ENCODE measurements at regions of chr16 and their contacts with region 1.

Region 1: GRCh38 chr16:67806428-67807147 is at the starts of genes RANBP10 and TSNAXIP1:
- DNase-seq: peak; percentile 98 to 99
- ATAC-seq: peak; percentile 97 to 98
- H3K4me3 ChIP-seq: peak within 1 kb of the TSS; percentile 86 to 99 (median 96)
- H3K27ac ChIP-seq: peak within 1 kb of the TSS; percentile 92 to 99 (median 97)
- H3K4me1 ChIP-seq: peaks cover 32 to 35% of the 10 kb centered on the region in 2 donors
- H3K27me3 ChIP-seq: no peaks in the 10 kb centered on the region
- CTCF ChIP-seq: no peak
- POLR2A ChIP-seq: peak; percentile 92 to 97
- total RNA-seq, gene RANBP10: 12.6 to 46.6 (median 14.8) TPM
- total RNA-seq, gene TSNAXIP1: 0.27 to 11.0 (median 0.56) TPM in 3 of 4 donors, not detected in the other

Region 2: GRCh38 chr16:67579686-67580085 is 226.9 kb before region 1 on chr16:
- in situ Hi-C with region 1: no loop called
- intact Hi-C with region 1: no loop called
- DNase-seq: no peak
- ATAC-seq: no peak
- H3K4me3 ChIP-seq: no peak overlapping the region
- H3K27ac ChIP-seq: no peak overlapping the region
- H3K4me1 ChIP-seq: no peaks in the 10 kb centered on the region
- H3K27me3 ChIP-seq: no peaks in the 10 kb centered on the region
- CTCF ChIP-seq: no peak
- POLR2A ChIP-seq: no peak

Region 3: GRCh38 chr16:67595033-67595355 is 211.6 kb before region 1 on chr16:
- in situ Hi-C with region 1: no loop called
- intact Hi-C with region 1: no loop called
- DNase-seq: peak; percentile 29 to 35
- ATAC-seq: peak; percentile 60 to 69
- H3K4me3 ChIP-seq: no peak overlapping the region
- H3K27ac ChIP-seq: peak overlapping the region in 2 of 4 donors; percentile 8 to 33
- H3K4me1 ChIP-seq: peaks cover 14% of the 10 kb centered on the region in 2 donors
- H3K27me3 ChIP-seq: no peaks in the 10 kb centered on the region
- CTCF ChIP-seq: no peak
- POLR2A ChIP-seq: no peak

Region 4: DNA sequence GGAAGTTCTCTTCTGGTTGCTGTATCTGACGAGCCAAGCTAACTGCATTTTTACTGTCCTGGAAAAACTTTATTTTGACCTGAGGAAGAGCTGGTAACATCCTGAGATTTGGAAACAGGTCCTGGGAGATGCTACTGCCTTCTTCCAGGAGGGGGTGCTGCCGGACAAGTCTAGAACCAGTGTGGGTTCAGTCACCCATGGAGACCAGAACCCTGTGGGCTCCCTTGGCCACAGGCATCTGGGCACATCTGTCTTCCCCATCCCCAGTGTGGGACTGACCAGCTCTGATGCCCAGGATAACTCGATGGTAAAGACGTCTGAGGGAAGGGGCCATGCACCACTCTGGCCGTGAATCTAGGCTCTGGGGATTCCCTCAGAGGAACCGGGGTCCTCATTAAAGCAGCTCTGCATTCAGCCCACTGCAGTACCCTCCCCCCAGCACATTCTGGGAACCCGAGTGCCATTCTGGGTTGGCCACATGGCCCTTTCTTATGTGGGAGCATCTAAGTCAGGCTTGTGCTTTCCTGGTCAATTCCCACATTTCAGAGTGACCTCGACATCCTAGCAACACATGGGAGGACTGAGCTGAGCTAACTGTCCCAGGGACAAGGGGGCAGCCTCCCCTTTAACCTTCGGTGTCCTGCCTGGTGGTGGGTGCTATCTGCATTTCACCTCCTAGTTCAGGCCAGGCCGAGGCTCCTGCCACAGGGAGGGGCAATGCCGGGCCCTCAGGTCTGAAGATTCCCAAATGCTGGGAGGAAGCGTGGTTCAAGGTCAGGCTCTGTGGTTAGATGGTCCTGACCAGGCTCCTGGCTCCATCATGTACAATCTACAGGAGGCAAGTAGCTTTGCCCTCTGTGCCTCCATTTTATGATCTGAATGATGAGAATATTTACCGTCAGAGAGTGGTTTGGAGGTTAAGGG is 133.6 kb before region 1 on chr16:
- in situ Hi-C with region 1: no loop called
- intact Hi-C with region 1: loop called (anchors 1 kb)
- DNase-seq: peak; percentile 40 to 57
- ATAC-seq: peak; percentile 38 to 51
- H3K4me3 ChIP-seq: no peak overlapping the region
- H3K27ac ChIP-seq: peak overlapping the region; percentile 50 to 80 (median 73)
- H3K4me1 ChIP-seq: peaks cover 13 to 21% of the 10 kb centered on the region in 2 donors
- H3K27me3 ChIP-seq: no peaks in the 10 kb centered on the region
- CTCF ChIP-seq: peak; percentile 63 to 82 (median 74)
- POLR2A ChIP-seq: no peak

Region 5: DNA sequence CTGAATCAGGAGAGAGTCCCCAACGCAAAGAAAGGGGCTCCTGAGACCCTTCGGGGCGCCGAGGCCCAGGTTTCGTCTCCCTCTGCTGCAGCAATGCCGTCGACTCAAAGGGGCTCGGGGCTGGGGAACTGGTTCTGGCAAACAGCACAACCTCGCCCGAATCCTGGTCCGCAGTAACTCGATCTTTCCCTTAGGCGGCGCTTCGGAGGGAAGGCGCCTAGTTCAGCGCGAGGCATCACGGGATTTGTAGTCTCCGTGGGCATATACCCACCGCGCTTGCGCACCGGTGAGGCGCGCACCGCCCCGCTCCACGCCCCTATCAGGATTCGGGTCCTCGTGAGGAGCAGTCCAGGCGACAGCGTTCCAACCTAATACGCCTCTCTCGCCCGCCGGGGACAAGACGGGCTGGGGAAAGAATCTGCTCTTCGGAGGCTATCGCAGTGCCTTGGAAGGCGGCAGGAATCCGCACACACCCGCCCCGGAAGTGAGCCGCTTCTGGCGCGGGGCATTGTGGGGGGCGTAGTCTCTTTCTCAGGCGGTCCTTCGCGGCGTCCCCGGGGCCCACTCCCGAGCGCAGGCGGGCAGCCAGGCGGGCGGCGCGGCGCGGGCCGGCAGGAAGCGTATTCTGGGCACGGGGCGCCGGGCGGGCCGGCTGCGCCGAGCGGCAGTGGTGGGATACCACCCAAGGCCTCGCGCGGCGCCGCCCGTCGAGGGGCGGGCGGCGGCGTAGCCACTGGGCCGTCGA is 35.3 kb after region 1 on chr16 and contains the start of gene THAP11:
- in situ Hi-C with region 1: no loop called
- intact Hi-C with region 1: loop called (anchors 2 kb)
- DNase-seq: peak; percentile 91 to 92
- ATAC-seq: peak; percentile 77 to 82
- H3K4me3 ChIP-seq: peak within 1 kb of the TSS; percentile 76 to 95 (median 78)
- H3K27ac ChIP-seq: peak within 1 kb of the TSS; percentile 98 to 100 (median 99)
- H3K4me1 ChIP-seq: peaks cover 39 to 43% of the 10 kb centered on the region in 2 donors
- H3K27me3 ChIP-seq: no peaks in the 10 kb centered on the region
- CTCF ChIP-seq: peak; percentile 76 to 91 (median 89)
- POLR2A ChIP-seq: peak; percentile 86 to 87
- total RNA-seq, gene THAP11: 61.9 to 120 (median 102) TPM

Region 6: GRCh38 chr16:67872786-67873537 is 66.4 kb after region 1 on chr16 and contains the start of gene EDC4:
- in situ Hi-C with region 1: no loop called
- intact Hi-C with region 1: no loop called
- DNase-seq: peak; percentile 68 to 85
- ATAC-seq: peak; percentile 86 to 89
- H3K4me3 ChIP-seq: peak within 1 kb of the TSS; percentile 71 to 92 (median 84)
- H3K27ac ChIP-seq: peak within 1 kb of the TSS; percentile 85 to 94 (median 89)
- H3K4me1 ChIP-seq: peaks cover 28 to 31% of the 10 kb centered on the region in 2 donors
- H3K27me3 ChIP-seq: no peaks in the 10 kb centered on the region
- CTCF ChIP-seq: no peak
- POLR2A ChIP-seq: peak; percentile 73 to 88
- total RNA-seq, gene EDC4: 27.5 to 58.9 (median 48.5) TPM

Region 7: DNA sequence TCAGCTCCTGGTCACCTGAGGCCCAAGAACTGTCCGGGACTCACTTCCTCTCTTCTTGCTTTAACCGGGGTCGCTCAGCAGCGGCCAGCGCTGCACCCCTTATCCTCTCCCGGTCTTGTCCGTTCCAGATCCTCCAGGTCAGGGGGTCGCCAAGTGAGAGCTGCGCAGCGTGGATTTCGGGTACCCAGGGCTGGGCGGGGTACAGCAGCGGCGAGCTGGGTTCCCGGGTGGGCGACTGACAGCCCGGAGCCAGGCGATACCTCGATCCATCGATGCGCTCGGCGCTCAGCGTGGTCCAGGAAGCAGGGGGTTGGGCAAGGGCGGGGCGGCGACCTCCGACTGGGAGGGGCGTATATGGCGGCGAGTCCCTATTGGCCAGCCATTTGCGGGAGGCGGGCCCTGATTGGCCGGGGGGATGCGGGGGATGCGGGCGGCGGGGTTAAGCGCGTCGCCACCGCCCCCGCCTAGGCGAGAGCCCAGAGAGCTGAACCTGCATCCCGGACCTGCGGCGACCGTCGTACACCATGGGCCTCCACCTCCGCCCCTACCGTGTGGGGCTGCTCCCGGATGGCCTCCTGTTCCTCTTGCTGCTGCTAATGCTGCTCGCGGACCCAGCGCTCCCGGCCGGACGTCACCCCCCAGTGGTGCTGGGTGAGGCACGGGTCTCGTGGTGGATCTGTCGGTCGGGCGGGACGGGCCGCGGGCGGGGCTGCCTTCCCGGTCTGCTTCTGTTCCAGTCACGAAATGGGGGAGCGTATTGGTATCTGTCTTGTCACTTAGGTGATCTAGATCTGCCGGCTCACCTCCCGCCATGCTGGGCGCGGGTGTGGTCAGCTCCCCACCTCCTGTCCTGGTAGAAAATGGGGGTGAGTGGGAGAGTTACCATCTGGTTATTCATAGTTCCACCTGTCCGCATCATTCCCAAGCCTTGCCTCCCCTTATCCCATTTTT is 438.6 kb after region 1 on chr16 and contains the start of gene PLA2G15:
- in situ Hi-C with region 1: loop called in 1 of 4 experiments (anchors 25 kb)
- intact Hi-C with region 1: no loop called
- DNase-seq: peak; percentile 96 to 97
- ATAC-seq: peak; percentile 58 to 63
- H3K4me3 ChIP-seq: peak within 1 kb of the TSS; percentile 68 to 97 (median 92)
- H3K27ac ChIP-seq: peak within 1 kb of the TSS; percentile 95 to 100 (median 99)
- H3K4me1 ChIP-seq: peaks cover 42 to 52% of the 10 kb centered on the region in 2 donors
- H3K27me3 ChIP-seq: no peaks in the 10 kb centered on the region
- CTCF ChIP-seq: no peak
- POLR2A ChIP-seq: peak; percentile 98 to 99
- total RNA-seq, gene PLA2G15: 67.8 to 91.3 (median 84.8) TPM